ENCODE measurements at regions of chr16 and their contacts with region 1.

Region 1: DNA sequence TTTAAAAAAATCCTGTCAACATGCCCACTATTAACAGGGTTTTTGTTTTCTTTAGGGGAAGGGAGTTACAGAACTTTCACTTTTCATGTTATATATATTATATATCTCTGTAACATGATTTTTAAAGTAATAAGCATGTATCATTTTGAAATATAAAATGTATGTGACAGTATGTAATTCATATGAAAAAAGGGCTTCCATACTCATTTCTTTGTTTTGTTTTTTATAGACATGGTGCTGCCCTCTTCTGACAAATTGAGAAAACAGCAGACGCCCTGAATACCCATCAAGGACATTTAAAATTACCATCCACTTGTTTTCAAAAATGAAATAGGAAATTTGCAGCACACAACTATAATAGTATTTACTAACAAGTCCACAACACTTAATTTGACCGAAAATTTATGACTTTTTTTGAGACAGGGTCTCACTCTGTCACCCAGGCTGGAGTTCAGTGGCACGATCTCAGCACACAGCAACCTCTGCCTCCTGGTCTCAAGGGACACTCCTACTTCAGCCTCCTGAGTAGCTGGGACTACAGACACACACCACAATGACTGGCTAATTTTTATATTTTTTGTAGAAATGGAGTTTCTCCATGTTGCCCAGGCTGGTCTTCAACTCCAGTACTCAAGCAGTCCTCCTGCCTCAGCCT is 30.4 kb downstream of the CFDP1 start:
- DNase-seq: no peak
- ATAC-seq: no peak
- H3K4me3 Mint-ChIP-seq: no peak overlapping the region
- H3K27ac Mint-ChIP-seq: no peak overlapping the region
- H3K4me1 Mint-ChIP-seq: no peaks in the 10 kb centered on the region
- H3K27me3 Mint-ChIP-seq: no peaks in the 10 kb centered on the region

Region 2: GRCh38 chr16:75234856-75235696 is 167.9 kb before region 1 on chr16:
- CTCF ChIA-PET with region 1: interaction called, 25 read pairs
- POLR2A ChIA-PET with region 1: no interaction called
- DNase-seq: no peak
- ATAC-seq: no peak
- H3K4me3 Mint-ChIP-seq: no peak overlapping the region
- H3K27ac Mint-ChIP-seq: no peak overlapping the region
- H3K4me1 Mint-ChIP-seq: peaks cover 1% of the 10 kb centered on the region
- H3K27me3 Mint-ChIP-seq: peaks cover 5% of the 10 kb centered on the region

Region 3: DNA sequence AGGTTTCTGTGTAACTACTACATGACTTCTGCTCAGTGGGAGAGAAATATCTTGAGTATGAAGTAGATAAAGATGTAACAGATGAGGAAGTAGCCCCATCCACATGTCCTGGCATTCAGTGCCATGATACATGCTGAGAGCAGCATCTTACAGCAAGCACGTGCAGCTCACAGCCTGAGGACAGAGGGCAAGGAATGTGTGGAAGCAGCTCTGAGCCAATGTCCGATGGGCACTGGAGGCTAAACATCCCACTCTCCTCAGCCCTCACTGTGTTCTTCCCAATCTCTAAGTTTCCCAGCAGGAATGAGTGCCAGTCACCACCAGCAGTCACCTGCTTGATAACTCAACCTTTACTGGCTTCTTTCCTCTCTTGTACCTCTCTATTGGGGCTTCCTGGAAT is 10.0 kb before region 1 on chr16:
- CTCF ChIA-PET with region 1: interaction called, 15 read pairs
- POLR2A ChIA-PET with region 1: interaction called, 3 read pairs
- DNase-seq: no peak
- ATAC-seq: no peak
- H3K4me3 Mint-ChIP-seq: no peak overlapping the region
- H3K27ac Mint-ChIP-seq: no peak overlapping the region
- H3K4me1 Mint-ChIP-seq: no peaks in the 10 kb centered on the region
- H3K27me3 Mint-ChIP-seq: no peaks in the 10 kb centered on the region

Region 4: GRCh38 chr16:75584108-75584507 is 181.2 kb after region 1 on chr16:
- CTCF ChIA-PET with region 1: no interaction called
- POLR2A ChIA-PET with region 1: no interaction called
- DNase-seq: no peak
- ATAC-seq: no peak
- H3K4me3 Mint-ChIP-seq: no peak overlapping the region
- H3K27ac Mint-ChIP-seq: no peak overlapping the region
- H3K4me1 Mint-ChIP-seq: peaks cover 3% of the 10 kb centered on the region
- H3K27me3 Mint-ChIP-seq: no peaks in the 10 kb centered on the region